ENCODE measurements at regions of chr16 and their contacts with region 1.

Region 1: DNA sequence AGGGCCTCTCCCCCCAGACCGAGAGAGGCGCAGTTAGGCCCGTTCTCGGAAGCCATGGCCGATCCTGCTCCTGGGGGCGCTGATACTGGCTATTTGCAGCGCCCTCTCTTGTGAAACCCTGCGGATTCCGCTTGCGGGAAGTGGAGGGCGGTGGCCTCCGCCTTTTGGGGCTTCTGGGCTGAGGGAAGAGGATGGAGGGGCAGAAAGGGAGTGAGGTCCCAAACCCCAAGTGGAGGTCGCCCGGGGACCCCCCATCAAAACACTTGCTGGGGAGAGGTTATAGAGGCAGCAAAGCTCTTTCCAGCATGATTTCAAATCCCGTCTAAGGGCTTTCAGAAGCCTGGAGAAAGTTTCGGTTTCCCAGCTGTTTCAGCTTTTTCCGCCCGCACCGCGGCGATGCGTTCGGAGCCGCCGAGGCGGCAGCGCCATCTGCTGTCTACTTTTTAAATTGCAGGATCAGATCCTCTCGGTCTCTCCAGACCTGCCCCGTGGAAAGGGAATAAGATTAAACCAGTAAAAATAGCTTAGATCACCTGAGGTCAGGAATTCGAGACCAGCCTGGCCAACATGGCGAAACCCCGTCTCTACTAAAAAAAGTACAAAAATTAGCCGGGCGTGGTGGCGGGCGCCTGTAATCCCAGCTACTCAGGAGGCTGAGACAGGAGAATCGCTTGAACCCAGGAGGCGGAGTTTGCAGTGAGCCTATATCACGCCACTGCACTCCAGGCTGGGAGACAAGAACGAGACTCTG is 15.8 kb downstream of the SNX20 start:
- H3K4me3 ChIP-seq: peak overlapping the region; percentile 6
- H3K27ac ChIP-seq: no peak overlapping the region
- H3K4me1 ChIP-seq: no peaks in the 10 kb centered on the region
- CTCF ChIP-seq: peak; percentile 66

Region 2: DNA sequence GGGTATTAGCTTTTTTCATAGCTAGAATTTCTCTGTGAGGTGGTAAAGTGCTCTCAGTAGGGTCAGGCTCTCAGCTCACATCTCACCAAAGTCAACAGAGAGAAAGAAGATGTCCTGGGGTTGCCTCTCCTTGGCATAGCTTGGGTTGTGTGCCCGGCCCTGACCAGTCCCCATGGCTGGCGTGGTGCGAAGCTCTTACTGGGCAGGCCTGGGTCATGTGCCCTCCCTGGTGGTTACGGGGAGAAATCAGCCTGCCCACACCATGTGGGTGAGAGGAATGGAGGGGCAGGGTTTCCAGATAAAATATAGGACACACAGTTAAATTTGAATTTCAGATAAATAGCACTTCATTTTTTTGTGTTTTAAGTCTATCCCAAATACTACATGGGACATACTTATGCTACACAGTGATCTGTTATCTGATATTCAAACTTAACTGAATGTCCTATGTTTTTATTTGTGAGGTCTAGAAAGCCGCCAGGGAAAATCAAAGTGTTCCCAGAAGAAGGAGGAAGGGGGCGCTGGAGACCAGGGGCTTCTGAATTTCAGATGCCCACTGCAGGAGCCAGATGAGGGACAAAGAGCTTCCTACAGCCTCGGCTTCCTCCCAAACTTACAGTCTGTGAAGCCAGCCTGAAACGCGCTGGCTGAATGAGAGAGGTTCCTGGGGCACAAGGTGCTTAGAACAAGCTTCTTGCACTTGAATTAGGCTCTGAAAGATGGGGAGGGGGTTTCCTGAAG is 71.7 kb before region 1 on chr16:
- CTCF ChIA-PET with region 1: interaction called, 13 read pairs
- POLR2A ChIA-PET with region 1: no interaction called
- H3K4me3 ChIP-seq: no peak overlapping the region
- H3K27ac ChIP-seq: no peak overlapping the region
- H3K4me1 ChIP-seq: peaks cover 3% of the 10 kb centered on the region; the same call in 1 of the 2 replicates
- CTCF ChIP-seq: no peak

Region 3: DNA sequence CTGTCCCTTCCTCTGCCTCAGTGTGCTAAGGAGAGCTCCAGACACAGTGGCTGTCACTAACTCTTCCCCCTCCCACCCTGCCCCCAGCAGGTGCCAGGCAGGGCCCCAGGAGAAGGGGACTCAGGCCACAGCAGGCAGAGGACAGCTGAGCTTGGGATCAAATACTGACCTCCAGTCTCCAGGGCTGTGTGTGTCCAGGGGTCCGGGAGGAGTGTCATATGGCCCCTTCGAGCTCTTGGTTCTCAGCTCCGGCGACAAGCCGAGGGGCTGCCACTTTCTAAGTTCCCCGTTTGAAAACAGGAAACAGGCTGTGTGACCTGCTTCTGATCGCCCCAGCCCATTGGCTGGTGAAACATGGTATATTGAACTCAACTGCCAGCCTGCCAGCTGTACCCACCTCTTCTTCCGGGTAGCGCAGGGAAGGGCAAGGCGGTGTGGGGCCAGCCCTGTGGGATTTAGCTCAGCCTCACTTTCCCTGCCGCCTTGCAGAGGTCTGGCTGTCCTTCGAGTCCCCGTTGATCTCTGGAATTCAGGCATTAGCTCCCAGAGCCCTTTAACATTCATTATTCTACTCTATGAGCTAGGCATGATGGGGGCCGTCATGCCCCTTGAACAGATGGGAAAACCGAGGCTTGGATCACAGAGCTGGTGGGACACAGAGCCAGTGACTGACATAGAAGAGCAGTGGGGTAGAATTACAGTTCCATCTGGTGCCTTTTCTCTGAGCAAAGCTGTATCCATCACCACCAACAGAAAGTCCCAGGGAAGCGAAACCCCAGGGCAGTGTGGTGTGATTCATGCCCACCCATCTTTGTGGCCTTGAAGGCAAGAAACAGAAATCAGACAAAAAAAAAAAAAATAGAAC is 15.9 kb after region 1 on chr16 and contains the start of gene SNX20:
- CTCF ChIA-PET with region 1: interaction called, 39 read pairs
- POLR2A ChIA-PET with region 1: no interaction called
- H3K4me3 ChIP-seq: no peak within 1 kb of the TSS
- H3K27ac ChIP-seq: no peak within 1 kb of the TSS
- H3K4me1 ChIP-seq: no peaks in the 10 kb centered on the region
- CTCF ChIP-seq: no peak

Region 4: DNA sequence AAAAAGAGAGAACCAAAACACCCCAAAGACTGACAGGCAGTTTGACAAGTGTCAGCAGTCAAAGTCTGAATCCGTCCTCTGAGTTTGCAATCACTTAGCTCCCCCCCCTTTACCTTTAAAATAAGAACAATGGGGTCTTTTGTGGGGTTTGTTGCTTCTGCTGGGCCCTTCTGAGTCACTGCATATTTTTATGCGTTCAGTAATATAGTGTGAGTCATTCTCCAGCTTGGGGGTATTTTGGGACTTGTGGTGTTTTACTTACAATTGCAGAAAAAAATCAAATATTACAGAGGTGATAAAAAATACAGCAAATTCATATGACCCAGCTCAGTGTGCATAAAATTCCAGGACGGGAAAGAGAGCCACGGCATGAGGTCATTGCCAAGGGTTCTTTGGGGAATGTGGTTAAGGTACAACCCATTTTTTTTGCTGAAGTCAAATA is 196.7 kb after region 1 on chr16:
- CTCF ChIA-PET with region 1: no interaction called
- POLR2A ChIA-PET with region 1: no interaction called
- H3K4me3 ChIP-seq: no peak overlapping the region
- H3K27ac ChIP-seq: no peak overlapping the region
- H3K4me1 ChIP-seq: peaks cover 3% of the 10 kb centered on the region; the same call in 1 of the 2 replicates
- CTCF ChIP-seq: no peak

Region 5: DNA sequence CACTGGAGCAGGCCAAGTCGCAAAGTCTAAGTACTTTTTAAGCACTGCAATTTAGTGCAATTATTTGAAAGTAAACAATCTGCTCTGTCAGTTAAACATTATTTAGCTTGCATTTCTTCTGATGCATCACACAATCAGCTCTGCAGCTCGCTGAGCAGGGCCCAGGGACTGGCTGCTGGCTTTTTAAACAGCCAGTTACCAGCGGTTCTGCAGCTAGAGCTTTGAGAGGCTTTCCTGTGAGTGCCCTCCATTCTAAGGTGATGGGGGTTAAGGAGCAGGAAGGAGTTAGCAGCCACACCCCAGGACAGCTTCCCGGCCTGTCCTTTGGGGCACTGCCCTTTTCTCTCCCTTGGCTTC is 331.5 kb after region 1 on chr16:
- CTCF ChIA-PET with region 1: no interaction called
- POLR2A ChIA-PET with region 1: no interaction called
- H3K4me3 ChIP-seq: no peak overlapping the region
- H3K27ac ChIP-seq: no peak overlapping the region
- H3K4me1 ChIP-seq: no peaks in the 10 kb centered on the region
- CTCF ChIP-seq: no peak

Measured in HEK293 (cell line).